ENCODE measurements at regions of chr1 and their contacts with region 1.

Region 1: DNA sequence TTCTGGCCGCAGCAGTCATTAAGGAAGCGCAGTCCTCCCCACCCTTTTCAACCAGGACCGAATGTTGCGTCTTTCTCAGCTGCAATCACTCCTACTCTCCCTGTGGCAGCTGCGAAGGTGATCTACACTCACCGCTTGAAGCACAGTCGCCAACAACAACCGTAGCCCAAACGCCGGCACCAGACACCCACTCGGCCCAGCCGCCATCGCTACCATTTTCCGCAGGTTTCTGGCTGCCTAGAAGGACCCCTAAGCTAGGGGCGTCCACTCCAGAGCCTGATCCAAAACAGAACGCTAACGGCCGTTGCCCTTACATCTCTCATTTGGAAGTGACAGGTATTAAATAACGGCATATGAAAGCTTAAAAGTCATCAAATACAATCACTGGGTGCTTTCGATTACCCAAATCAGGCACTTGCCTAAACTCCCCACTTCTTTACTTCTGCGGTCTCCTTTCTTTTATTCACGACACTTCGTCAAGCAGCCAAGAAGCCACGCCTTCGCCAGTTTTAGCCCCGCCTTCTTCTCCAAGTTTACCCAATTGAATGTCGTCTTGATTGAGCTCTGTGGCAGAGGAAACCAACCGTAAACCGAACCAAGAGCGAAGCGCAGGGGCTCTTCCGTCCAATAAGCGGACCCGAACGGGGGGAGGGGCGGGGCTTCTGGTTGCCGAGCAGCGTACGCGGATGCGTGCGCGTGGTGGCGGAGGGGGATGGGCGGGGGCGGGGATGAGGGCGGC is at the start of gene SELENOF:
- DNase-seq: peak; percentile 98
- H3K4me3 Mint-ChIP-seq: no peak within 1 kb of the TSS
- H3K27ac Mint-ChIP-seq: no peak within 1 kb of the TSS
- H3K4me1 Mint-ChIP-seq: peaks cover 38% of the 10 kb centered on the region
- H3K27me3 Mint-ChIP-seq: no peaks in the 10 kb centered on the region
- total RNA-seq, gene SELENOF: 174 and 198 TPM in 2 replicates

Region 2: DNA sequence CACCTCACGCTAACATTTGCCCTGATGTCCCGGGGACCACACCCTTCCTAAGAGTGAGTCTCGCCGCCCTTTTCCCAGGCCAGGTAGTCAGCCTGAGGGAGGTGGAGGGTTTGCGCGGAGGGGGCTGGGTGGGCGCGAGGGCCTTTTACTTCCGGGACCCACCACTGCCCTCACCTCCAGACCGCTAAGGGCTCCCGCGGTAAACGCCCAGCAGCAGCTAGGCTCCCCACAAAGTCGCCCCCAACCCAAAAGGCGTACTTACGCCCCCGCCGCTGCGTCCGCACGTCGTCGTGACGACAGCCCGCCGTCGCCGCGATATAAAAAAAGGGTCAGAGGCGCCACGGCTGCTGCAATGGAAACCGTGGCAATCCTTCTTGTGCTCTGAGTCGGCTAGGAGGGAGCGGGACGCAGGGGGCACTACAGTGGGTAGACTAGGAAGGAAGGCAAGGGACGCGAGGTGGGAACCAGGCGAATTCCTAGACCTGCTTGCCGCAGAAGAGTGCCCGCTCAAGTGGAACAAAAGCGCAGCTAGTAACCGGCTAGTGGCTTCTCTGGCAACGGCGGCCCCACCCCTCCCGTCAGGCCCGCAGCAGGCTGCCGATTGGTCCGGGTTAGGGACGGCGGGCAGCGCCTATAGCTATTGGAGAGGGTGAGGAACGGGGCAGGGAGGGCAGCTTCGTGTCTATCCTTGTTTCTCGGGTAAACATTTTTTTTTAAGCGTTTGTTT is 518.1 kb before region 1 on chr1 and contains the start of gene ODF2L:
- intact Hi-C with region 1: loop called (anchors 1 kb)
- DNase-seq: peak; percentile 90
- H3K4me3 Mint-ChIP-seq: peak within 1 kb of the TSS; percentile 97
- H3K27ac Mint-ChIP-seq: peak within 1 kb of the TSS; percentile 96
- H3K4me1 Mint-ChIP-seq: peaks cover 54% of the 10 kb centered on the region
- H3K27me3 Mint-ChIP-seq: no peaks in the 10 kb centered on the region
- total RNA-seq, gene ODF2L: 21.0 and 22.4 TPM in 2 replicates

Region 3: GRCh38 chr1:86704458-86704971 is 209.6 kb before region 1 on chr1 and contains the start of gene SH3GLB1:
- intact Hi-C with region 1: loop called (anchors 1 kb)
- DNase-seq: peak; percentile 87
- H3K4me3 Mint-ChIP-seq: peak within 1 kb of the TSS; percentile 100
- H3K27ac Mint-ChIP-seq: peak within 1 kb of the TSS; percentile 97
- H3K4me1 Mint-ChIP-seq: peaks cover 47% of the 10 kb centered on the region
- H3K27me3 Mint-ChIP-seq: no peaks in the 10 kb centered on the region
- total RNA-seq, gene SH3GLB1: 63.4 and 66.8 TPM in 2 replicates

Region 4: DNA sequence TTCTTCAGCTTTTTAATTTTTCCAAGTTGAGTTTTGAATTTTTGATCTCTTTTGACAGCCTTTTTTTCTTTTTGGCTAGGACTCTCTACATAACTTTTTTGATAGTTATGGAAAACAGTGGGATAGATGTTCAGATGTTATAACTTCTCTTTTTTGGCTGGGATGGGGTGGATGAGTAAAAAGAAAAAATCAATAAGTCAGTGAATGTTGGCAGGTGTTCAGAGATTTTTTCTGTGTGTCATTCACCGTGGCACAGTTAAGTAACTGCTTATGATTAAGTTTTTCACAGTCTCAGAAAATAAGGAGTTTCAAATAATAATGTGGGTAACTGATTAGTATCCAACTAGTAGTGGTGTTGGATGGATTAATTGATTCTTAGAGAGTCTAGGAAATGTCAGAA is 24.4 kb after region 1 on chr1:
- intact Hi-C with region 1: no loop called
- DNase-seq: no peak
- H3K4me3 Mint-ChIP-seq: no peak overlapping the region
- H3K27ac Mint-ChIP-seq: no peak overlapping the region
- H3K4me1 Mint-ChIP-seq: peaks cover 7% of the 10 kb centered on the region
- H3K27me3 Mint-ChIP-seq: no peaks in the 10 kb centered on the region

Region 5: GRCh38 chr1:86957221-86957620 is 43.2 kb after region 1 on chr1:
- intact Hi-C with region 1: loop called (anchors 2 kb)
- DNase-seq: no peak
- H3K4me3 Mint-ChIP-seq: no peak overlapping the region
- H3K27ac Mint-ChIP-seq: no peak overlapping the region
- H3K4me1 Mint-ChIP-seq: no peaks in the 10 kb centered on the region
- H3K27me3 Mint-ChIP-seq: no peaks in the 10 kb centered on the region

Region 6: GRCh38 chr1:87007323-87007722 is 93.3 kb after region 1 on chr1:
- intact Hi-C with region 1: no loop called
- DNase-seq: no peak
- H3K4me3 Mint-ChIP-seq: no peak overlapping the region
- H3K27ac Mint-ChIP-seq: no peak overlapping the region
- H3K4me1 Mint-ChIP-seq: no peaks in the 10 kb centered on the region
- H3K27me3 Mint-ChIP-seq: no peaks in the 10 kb centered on the region

Region 7: GRCh38 chr1:87084244-87084836 is 170.3 kb after region 1 on chr1:
- intact Hi-C with region 1: loop called (anchors 1 kb)
- DNase-seq: no peak
- H3K4me3 Mint-ChIP-seq: no peak overlapping the region
- H3K27ac Mint-ChIP-seq: no peak overlapping the region
- H3K4me1 Mint-ChIP-seq: peaks cover 5% of the 10 kb centered on the region
- H3K27me3 Mint-ChIP-seq: no peaks in the 10 kb centered on the region

Region 8: DNA sequence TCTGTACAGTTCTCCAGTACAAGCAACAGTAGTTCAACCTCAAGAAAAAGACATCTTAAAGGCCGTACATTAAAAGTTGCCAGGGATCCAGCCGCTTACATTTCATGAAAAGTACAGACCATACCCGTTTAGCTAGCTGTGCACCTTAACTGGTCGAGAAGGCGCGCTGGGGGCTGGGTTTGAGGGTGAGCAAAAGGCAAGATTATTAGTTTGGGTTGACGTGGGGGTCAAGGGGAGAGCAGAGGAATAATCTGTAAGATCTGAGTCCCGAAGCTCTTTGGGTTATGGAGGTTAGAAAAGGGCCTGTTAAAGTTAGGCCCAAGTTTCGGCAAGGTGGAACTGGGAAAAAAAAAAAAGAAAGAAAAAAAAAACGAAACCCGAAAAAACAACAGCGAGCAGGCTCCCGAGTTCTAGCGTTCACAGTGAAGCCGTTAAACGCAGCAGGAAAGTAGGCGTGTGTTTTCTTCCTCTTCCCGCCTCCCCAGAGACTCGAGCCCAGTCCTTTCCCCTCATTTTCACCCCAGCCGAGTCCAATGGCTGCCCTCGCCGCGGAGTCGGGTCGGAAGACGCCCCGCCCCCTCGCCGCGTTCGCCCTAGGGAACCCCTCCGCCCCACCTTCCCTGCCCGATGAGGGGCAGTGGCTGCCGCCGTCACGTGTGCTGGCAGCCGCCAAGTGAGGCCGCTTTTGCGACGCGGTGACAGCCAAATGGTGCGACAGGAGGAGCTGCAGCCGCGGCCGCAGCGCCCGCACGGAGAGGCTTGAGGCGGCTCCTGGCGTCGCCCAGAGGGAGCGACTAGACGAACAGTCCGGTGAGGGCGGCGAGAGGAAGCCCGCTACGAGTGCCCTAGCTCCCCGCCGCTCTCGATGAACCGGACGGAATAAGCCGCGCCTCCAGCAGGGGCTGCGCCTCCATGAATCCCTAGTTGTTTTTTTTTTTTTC is 1769.7 kb after region 1 on chr1 and contains the start of gene PKN2:
- intact Hi-C with region 1: loop called (anchors 1 kb)
- DNase-seq: peak; percentile 97
- H3K4me3 Mint-ChIP-seq: peak within 1 kb of the TSS; percentile 100
- H3K27ac Mint-ChIP-seq: peak within 1 kb of the TSS; percentile 100
- H3K4me1 Mint-ChIP-seq: peaks cover 35% of the 10 kb centered on the region
- H3K27me3 Mint-ChIP-seq: peaks cover 5% of the 10 kb centered on the region
- total RNA-seq, gene PKN2: 23.8 and 26.0 TPM in 2 replicates

Measured in activated T-helper 1 cell treated with anti-CD3 and anti-CD28 coated beads, Interleukin-12 subunit alpha, Interleukin-12 subunit beta, Interleukin-2, Interleukin-4 antibody, amounts not matched to agents 30 ng/mL and 10 ng/mL and 1 ng/mL, durations not matched to agents 14 hours and 24 hours and 36 hours (primary cell).